CD8-positive, alpha-beta T cell (primary cell): ENCODE measurements at regions of chr5 and their contacts with region 1.

Region 1: DNA sequence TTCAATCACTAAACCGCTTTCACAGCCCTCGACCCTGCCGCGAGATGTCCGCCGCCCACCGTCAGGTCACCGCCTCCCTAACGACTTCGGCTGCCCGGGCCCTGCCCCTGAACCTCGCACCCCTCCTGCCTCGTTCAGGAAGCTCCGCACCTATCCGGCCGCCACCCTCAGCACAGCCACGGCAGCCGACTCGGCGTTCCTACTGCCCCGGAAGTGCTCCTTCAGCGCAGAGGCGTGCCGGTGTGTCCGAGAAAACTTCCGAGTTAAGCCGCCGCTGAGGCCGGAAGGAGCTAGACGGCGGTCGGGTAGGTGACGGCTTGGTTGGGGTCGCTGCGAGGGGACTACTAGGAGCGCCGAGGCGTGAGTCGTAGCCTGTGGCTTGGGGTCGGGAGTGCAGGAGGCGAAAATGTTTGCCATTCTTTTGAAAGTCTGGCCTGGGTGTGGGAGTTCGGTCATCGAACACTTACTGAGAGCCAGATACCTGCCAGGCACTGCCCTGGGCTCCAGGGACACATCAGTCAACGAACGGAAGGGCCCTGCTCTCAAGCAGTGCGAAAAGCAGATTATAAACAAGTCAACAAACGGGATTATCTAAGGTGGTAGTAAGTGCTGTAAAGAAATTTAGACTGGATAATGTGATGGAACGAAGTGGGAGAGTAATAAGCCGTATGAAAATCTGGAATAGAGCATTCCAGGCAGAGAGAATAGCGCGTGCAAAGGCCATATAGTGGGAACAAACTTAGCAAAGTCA is at the starts of genes FAM114A2 and MFAP3:
- DNase-seq: peak; percentile 77 to 93 (median 88)
- ATAC-seq: peak; percentile 97
- H3K4me3 ChIP-seq: peak within 1 kb of the TSS; percentile 72 to 91
- H3K4me3 Mint-ChIP-seq: peak within 1 kb of the TSS; percentile 95
- H3K27ac ChIP-seq: peak within 1 kb of the TSS; percentile 84 to 95
- H3K27ac Mint-ChIP-seq: peak within 1 kb of the TSS; percentile 98
- H3K4me1 ChIP-seq: peaks cover 25% of the 10 kb centered on the region
- H3K4me1 Mint-ChIP-seq: peaks cover 76% of the 10 kb centered on the region
- H3K27me3 ChIP-seq: no peaks in the 10 kb centered on the region
- H3K27me3 Mint-ChIP-seq: no peaks in the 10 kb centered on the region
- CTCF ChIP-seq: no peak
- total RNA-seq, gene FAM114A2: 24.9 to 26.6 TPM
- total RNA-seq, gene MFAP3: 16.6 to 20.2 TPM

Region 2: DNA sequence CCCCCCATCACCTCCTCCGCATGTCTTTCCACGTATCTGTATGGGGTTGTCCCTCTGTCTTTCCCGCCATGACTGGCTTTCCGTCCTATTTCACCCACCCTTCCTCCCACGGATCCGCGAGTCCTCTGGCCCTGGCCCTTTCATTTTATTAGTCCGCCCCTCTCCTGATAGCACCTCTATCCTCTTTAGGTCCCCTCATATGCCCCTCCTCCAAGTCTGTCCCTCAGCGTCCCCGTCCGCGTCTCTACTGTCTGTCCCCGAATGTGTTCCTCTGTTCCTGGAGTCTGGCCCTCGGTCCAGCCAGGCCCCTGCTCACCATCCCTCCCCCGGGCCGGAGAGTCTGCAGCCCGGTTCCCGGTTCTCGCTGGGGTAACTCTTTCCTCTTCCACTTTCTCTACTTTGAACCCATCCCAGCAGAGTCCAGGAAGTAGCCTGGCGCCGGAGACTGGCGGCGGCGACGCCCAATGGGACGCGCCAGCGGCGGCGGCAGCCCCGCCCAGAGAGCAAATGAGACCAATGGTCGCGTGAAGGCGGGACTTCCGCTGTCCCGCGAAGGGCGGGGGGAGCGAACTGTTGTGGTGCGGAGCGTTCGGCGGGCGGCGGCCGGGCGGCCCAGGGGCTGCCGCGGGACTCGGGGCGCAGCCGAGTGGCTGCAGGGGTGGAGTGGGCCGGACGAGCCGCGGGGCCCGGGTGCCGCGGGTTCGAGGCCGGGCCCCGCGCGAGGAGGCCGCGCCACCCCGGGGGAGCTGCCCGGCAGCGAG is 406.7 kb after region 1 on chr5 and contains the start of gene SAP30L:
- CTCF ChIA-PET with region 1: no interaction called
- POLR2A ChIA-PET with region 1: interaction called, 4 read pairs
- intact Hi-C with region 1: loop called (anchors 1 to 2 kb)
- DNase-seq: peak; percentile 92 to 98 (median 95)
- ATAC-seq: peak; percentile 93
- H3K4me3 ChIP-seq: peak within 1 kb of the TSS; percentile 98 to 100
- H3K4me3 Mint-ChIP-seq: peak within 1 kb of the TSS; percentile 98
- H3K27ac ChIP-seq: peak within 1 kb of the TSS; percentile 77 to 79
- H3K27ac Mint-ChIP-seq: peak within 1 kb of the TSS; percentile 96
- H3K4me1 ChIP-seq: peaks cover 40% of the 10 kb centered on the region
- H3K4me1 Mint-ChIP-seq: peaks cover 64% of the 10 kb centered on the region
- H3K27me3 ChIP-seq: no peaks in the 10 kb centered on the region
- H3K27me3 Mint-ChIP-seq: no peaks in the 10 kb centered on the region
- CTCF ChIP-seq: no peak
- total RNA-seq, gene SAP30L: 24.1 to 25.4 TPM